ENCODE measurements at regions of chr12 and their contacts with region 1.

Region 1: DNA sequence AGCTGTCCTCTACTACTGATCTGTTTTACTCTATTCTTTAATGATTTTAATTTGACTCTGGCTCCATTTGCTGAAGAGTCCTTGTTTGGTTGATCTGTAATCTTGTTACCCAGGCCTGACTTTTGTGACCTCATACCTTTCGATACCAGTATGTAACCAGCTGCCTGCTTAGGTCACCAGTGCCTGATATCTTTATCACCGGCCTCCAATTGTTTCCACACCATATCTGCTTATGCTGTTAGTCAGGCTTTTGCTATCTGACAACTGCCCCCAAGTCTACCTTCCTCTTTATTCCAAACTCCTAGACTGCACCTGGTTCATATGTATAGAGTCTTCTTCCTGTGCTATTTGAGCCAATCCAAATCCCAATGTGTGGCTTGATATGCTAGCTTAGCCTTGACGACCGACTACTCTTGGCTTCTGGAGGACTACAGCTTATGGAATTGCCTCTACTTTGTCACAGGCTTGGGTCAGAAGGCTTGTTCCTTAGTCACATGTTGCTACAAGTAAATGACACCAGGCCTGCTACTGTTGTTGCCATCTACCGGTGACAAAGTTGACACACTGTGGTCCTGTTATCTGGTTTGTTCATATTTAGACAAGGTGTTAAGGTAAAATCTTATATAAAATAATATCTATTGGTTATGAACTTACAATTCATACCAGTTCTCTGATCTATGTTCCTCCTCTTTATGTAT is 193.9 kb downstream of the TRHDE start:
- DNase-seq: no peak
- H3K4me3 ChIP-seq: no peak overlapping the region
- H3K27ac ChIP-seq: no peak overlapping the region
- H3K4me1 ChIP-seq: no peaks in the 10 kb centered on the region
- H3K27me3 ChIP-seq: no peaks in the 10 kb centered on the region
- CTCF ChIP-seq: no peak
- EP300 ChIP-seq: no peak
- POLR2A ChIP-seq: no peak

Region 2: DNA sequence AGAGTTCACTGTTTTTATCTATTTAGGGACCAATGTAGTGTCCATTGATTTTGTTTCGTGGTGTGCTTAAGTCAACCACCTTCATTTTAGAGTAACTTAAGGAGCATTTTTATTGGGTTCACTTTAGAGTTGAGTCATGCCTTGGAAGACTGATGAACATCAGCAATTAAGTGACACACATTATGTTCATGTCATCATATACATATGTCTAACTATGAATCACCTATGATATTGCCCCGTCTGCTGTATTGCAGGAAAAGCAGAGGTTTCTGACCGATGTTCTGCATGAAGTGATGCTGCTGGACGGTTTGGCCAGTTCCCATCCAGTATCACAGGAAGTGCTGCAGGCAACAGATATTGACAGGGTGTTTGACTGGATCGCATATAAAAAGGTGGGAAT is 33.2 kb after region 1 on chr12:
- in situ Hi-C with region 1: no loop called
- intact Hi-C with region 1: loop called (anchors 1 kb)
- DNase-seq: no peak
- H3K4me3 ChIP-seq: no peak overlapping the region
- H3K27ac ChIP-seq: no peak overlapping the region
- H3K4me1 ChIP-seq: no peaks in the 10 kb centered on the region
- H3K27me3 ChIP-seq: no peaks in the 10 kb centered on the region
- CTCF ChIP-seq: no peak
- EP300 ChIP-seq: no peak
- POLR2A ChIP-seq: no peak